Activated T-helper 1 cell treated with anti-CD3 and anti-CD28 coated beads, Interleukin-12 subunit alpha, Interleukin-12 subunit beta, Interleukin-2, Interleukin-4 antibody, amounts not matched to agents 30 ng/mL and 10 ng/mL and 1 ng/mL, durations not matched to agents 14 hours and 24 hours and 36 hours (primary cell): ENCODE measurements at regions of chrX and their contacts with region 1.

Region 1: DNA sequence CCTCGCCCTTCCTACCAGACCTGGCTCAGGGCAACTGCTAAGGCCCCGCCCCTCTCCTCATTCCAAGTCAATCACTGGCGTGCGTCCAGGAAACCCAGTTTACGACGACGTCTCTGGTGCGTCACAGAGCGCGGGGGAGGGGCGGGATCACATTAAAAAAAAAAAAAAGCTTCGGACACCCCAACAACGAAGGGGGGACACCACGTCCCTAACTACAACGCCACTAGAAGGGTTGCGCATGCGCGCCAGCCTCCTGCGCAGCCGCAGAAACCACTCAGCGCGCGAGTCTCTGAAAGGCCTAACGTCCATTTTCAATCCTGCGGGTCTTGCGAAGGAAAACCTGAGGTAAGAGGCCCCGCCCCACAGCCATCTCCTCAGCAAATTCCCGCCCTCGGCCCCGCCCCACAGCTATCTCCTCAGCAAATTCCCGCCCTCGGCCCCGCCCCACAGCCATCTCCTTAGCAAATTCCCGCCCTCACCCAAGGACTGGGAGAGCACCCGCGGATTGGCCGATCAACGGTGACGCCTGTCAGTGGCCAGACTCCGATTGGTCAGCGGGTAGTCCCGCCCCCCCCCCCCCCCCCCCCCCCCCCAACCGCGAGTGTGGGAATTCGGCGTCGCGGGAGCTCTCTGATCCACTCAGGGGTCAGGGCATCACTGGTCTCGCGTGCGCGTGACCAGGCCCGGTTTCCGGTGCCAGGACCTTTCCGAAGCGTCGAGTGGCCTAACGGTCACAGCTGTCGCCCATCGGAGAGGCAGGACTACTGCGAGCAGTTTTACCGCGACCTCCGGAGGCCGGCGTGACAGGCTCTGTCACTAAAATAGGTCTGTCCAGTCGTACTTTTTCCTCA is at the start of gene SCML1:
- DNase-seq: peak; percentile 75
- H3K4me3 Mint-ChIP-seq: peak within 1 kb of the TSS; percentile 80
- H3K27ac Mint-ChIP-seq: peak within 1 kb of the TSS; percentile 79
- H3K4me1 Mint-ChIP-seq: peaks cover 20% of the 10 kb centered on the region
- H3K27me3 Mint-ChIP-seq: peaks cover 34% of the 10 kb centered on the region
- total RNA-seq, gene SCML1: 1.1 and 1.4 TPM in 2 replicates

Region 2: GRCh38 chrX:17669458-17669857 is 67.6 kb before region 1 on chrX:
- intact Hi-C with region 1: loop called (anchors 5 kb)
- DNase-seq: no peak
- H3K4me3 Mint-ChIP-seq: peak overlapping the region; percentile 48
- H3K27ac Mint-ChIP-seq: peak overlapping the region; percentile 72
- H3K4me1 Mint-ChIP-seq: peaks cover 23% of the 10 kb centered on the region
- H3K27me3 Mint-ChIP-seq: peaks cover 1% of the 10 kb centered on the region

Region 3: DNA sequence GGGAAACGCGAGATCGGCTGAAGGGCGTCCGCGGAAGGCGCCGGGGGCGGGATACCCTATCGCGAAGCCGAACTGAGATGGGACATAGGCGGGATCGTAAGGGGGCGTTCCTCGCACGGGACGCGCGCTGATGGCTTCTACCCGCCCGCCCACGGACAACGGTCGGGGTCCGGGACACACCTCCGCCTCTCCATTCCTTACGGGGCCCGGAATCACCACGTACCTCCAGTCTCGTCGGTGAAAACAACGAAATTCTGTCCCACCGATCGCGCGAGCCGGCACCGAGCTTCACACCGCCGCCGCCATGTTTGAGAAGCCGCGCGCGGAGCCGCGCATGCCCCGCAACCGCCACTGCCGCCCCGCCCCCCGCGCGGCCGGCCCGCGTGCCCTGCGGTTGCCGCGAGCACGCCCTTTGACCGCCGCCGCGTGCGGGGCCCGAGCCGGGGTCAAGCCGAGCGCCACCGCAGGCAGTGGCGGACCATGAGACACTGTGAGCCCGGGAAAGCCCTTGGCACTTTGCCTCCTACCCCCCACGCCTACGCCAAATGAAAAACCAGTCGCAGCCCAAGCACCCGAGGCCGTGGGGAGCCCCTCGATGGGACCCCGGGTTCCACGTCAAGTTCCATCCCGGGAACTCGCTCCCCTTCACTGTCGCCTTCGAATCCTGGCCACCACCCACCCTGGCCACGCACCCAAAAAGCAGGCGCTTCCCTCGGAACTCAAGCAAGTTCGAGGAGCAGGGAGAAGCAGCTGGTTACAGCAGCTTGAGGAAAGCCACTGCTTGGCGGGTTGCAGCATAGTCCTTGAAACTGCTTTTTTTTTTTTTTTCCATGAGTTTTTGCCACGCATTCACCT is 617.5 kb after region 1 on chrX and contains the start of gene SCML2:
- intact Hi-C with region 1: loop called (anchors 2 kb)
- DNase-seq: peak; percentile 27
- H3K4me3 Mint-ChIP-seq: peak within 1 kb of the TSS; percentile 73
- H3K27ac Mint-ChIP-seq: no peak within 1 kb of the TSS
- H3K4me1 Mint-ChIP-seq: no peaks in the 10 kb centered on the region
- H3K27me3 Mint-ChIP-seq: peaks cover 28% of the 10 kb centered on the region
- total RNA-seq, gene SCML2: 3.0 and 3.6 TPM in 2 replicates

Region 4: DNA sequence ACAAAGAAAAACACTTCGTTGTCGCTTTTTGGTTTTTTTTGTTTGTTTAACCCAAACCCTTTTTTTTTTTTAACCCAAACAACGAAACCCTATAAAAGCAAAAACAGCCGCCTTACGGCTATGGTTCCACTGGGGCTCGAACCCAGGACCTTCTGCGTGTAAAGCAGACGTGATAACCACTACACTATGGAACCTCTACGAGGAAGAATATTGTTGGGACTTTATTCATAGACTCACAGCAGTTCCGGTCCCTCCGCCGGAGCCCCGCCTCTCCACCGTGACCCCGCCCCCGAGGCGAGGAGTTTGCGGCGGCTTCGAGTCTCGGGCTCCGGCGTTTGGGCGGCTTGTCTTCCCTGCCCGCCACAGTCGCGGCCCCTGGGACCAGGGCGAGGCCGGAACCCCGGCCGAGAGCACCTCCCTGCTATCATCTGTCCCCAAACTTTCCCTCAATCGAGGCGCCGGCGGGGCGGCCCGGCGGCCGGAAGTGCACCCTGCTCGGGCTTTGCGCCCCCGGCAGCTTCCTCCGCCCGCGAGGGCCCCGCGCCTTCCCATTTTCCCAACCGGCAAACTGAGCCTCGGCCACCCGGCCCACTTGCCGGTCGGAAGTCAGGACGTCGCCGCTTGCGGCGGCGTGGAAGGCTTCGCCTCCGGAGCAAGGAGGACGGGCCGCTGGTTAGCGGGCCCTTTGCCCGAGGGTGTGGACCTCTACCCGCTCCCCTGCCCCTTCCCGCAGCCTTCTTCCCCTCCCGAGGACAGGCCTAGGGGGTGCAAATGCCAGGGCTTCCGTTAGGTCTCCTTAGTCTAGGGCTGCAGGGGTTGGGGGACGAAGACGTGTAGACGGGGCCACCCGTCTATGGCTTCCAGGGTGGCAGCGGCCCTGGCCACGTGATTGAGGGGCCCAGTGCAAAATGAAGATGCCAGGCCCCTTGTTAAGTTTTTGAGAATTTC is 938.0 kb after region 1 on chrX:
- intact Hi-C with region 1: loop called (anchors 10 kb)
- DNase-seq: peak; percentile 75
- H3K4me3 Mint-ChIP-seq: peak overlapping the region; percentile 74
- H3K27ac Mint-ChIP-seq: peak overlapping the region; percentile 52
- H3K4me1 Mint-ChIP-seq: no peaks in the 10 kb centered on the region
- H3K27me3 Mint-ChIP-seq: no peaks in the 10 kb centered on the region

Region 5: GRCh38 chrX:19343535-19344408 is 1606.7 kb after region 1 on chrX and contains the start of gene PDHA1:
- intact Hi-C with region 1: loop called (anchors 5 kb)
- DNase-seq: peak; percentile 90
- H3K4me3 Mint-ChIP-seq: peak within 1 kb of the TSS; percentile 90
- H3K27ac Mint-ChIP-seq: peak within 1 kb of the TSS; percentile 90
- H3K4me1 Mint-ChIP-seq: peaks cover 13% of the 10 kb centered on the region
- H3K27me3 Mint-ChIP-seq: peaks cover 2% of the 10 kb centered on the region
- total RNA-seq, gene PDHA1: 213 and 218 TPM in 2 replicates